ENCODE measurements at regions of chr14 and their contacts with region 1.

Region 1: GRCh38 chr14:74612350-74613021 is 449 bp upstream of the LTBP2 start:
- DNase-seq: peak; percentile 86
- H3K4me3 ChIP-seq: peak overlapping the region; percentile 68
- H3K27ac ChIP-seq: no peak overlapping the region
- H3K4me1 ChIP-seq: peaks cover 24% of the 10 kb centered on the region
- CTCF ChIP-seq: peak; percentile 64

Region 2: DNA sequence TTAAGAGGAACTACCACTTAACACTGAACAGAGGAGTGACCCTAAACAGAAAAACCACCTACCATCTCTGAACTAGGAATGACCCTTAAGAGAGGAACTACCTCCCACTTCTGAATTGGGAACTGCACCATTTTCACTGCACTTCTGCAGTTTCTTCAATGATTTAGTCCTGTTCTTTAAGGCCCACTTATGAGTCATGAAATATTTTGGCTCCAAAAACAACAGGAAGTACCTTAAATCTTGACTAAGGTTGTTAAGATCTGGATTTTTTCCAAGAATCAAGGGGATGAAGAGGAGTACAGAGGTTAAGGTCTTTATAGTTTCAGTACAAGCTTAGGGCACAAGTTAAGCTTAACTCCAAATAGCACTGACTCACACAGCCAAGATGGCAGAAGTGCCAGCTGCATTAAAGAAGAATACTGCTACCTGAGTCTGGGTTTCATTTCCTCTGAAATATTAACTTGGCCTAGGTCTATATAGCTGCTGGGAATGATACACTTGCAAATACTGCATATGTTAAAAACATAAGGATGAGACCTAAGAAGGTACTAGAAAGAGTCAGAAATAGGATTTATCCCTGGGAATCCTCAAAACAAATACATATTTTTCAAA is 123.6 kb before region 1 on chr14:
- CTCF ChIA-PET with region 1: no interaction called
- POLR2A ChIA-PET with region 1: no interaction called
- intact Hi-C with region 1: no loop called
- DNase-seq: peak; percentile 47
- H3K4me3 ChIP-seq: no peak overlapping the region
- H3K27ac ChIP-seq: no peak overlapping the region
- H3K4me1 ChIP-seq: peaks cover 25% of the 10 kb centered on the region
- CTCF ChIP-seq: no peak

Region 3: GRCh38 chr14:74501135-74501614 is 111.3 kb before region 1 on chr14:
- CTCF ChIA-PET with region 1: no interaction called
- POLR2A ChIA-PET with region 1: interaction called, 3 read pairs
- intact Hi-C with region 1: loop called (anchors 5 kb)
- DNase-seq: peak; percentile 31
- H3K4me3 ChIP-seq: no peak overlapping the region
- H3K27ac ChIP-seq: no peak overlapping the region
- H3K4me1 ChIP-seq: peaks cover 4% of the 10 kb centered on the region
- CTCF ChIP-seq: peak; percentile 67

Region 4: GRCh38 chr14:74720526-74720925 is 108.0 kb after region 1 on chr14:
- CTCF ChIA-PET with region 1: no interaction called
- POLR2A ChIA-PET with region 1: no interaction called
- intact Hi-C with region 1: no loop called
- DNase-seq: no peak
- H3K4me3 ChIP-seq: no peak overlapping the region
- H3K27ac ChIP-seq: no peak overlapping the region
- H3K4me1 ChIP-seq: no peaks in the 10 kb centered on the region
- CTCF ChIP-seq: no peak

Region 5: DNA sequence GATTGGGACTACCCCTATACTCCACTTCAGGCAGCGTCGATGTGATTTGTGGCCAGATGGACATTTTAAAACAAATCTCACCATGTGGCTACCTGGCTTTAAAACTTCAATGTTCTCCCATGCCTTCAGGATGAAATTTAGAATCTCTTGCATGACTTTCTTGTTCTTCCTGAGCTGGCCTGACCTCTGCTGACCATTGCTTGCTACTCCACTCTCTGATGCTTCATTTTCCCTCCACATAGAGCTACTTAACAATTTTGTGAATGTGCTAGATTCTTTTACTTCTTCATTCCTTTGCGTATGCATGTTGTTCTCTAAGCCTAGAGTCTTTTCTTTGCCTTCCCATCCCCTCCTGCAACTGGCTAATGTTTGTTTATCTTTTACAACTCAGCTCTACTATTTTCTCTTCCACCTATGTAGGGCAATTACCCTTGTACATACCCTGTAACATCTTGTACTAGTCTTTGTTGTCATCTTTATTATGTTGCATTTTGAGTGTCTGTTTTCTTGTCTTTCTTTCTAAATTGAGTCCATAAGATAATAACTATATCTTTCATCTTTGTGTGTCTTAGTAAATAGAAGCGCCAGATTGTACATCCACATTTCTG is 191.8 kb after region 1 on chr14:
- CTCF ChIA-PET with region 1: interaction called, 6 read pairs
- POLR2A ChIA-PET with region 1: interaction called, 4 read pairs
- intact Hi-C with region 1: loop called (anchors 1 kb)
- DNase-seq: peak; percentile 57
- H3K4me3 ChIP-seq: no peak overlapping the region
- H3K27ac ChIP-seq: no peak overlapping the region
- H3K4me1 ChIP-seq: no peaks in the 10 kb centered on the region
- CTCF ChIP-seq: peak; percentile 79

Region 6: DNA sequence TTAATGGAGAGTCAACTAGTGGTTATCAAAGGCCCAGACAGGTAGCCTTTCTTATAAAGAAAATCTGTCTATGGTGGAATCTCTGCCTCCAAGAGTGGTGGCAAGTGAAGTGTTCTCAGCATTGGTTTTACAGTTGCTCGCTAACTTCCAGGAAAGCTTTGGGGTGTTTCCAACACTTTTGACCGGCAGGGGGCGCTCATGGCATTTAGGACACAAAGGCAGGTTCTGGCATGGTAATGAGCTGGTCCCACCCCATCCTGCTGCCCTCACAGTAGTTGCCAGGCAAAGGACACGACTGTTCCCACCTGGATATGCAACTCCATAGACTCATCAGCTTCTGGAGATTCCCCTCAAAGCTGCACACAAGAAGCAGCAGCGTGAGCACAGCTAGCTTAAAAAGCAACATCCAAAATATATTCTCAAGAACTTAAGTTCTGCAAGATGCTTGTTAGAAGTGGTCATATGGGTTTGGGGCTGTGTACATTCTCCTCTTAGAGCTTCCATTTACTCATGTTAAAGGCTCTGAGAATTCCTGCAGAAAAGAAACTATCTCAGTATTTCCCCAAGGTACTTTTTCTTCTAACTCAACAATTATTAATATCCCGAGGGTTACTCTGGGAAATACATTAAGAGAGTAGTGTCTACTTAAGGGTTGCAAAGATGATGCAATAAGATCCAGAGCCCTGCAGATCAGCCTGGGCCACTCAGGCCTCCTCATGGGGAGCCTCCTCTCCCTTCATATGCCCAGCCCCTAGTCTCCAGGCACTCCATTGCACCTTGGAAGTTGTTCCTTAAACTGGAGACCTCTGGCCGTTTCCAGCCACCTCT is 248.6 kb after region 1 on chr14:
- CTCF ChIA-PET with region 1: interaction called, 3 read pairs
- POLR2A ChIA-PET with region 1: no interaction called
- intact Hi-C with region 1: loop called (anchors 5 kb)
- DNase-seq: peak; percentile 90
- H3K4me3 ChIP-seq: no peak overlapping the region
- H3K27ac ChIP-seq: no peak overlapping the region
- H3K4me1 ChIP-seq: peaks cover 6% of the 10 kb centered on the region
- CTCF ChIP-seq: peak; percentile 96

Measured in OCI-LY7 (cell line).